Naive thymus-derived CD8-positive, alpha-beta T cell (primary cell): ENCODE measurements at regions of chr7 and their contacts with region 1.

Region 1: DNA sequence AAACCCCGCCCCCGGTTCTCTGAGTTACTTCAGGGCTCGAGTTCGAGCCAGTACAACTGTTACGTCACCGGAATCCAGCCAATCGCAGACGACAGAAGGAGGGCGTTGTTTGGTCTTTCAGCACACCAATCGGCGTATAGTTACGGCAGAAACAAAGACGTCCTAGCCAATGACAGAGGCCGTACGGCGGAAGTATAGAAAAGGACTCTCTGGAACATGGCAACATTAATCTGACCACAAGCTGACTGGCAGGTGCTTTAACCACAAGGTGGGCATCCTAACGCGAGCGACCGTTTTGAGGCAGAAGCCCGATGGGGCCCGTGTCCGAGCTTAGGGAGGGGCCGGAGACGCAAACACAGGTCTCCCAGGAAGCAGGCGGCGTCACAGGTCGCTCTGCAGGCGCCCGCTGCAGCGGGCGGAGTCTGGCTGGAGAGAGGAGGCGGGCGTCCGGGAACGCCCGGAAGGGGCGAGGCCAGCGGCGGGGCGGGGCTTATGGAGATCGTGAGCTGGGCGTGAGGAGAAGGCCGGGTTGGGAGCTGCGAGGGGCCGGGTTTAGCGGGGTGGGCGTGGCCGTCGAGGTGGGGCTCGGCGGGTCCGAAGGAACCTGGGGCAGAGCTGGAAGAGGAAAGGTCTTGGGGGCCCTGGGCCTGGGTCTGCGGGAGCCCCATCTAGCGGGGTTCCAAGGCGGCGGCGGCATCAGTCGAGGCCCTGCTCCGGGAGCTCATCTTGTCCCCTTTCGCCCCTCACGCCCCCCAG is at the start of gene MOSPD3:
- DNase-seq: peak; percentile 95 to 100 (median 98)
- ATAC-seq: peak; percentile 89 to 92
- H3K4me3 Mint-ChIP-seq: peak within 1 kb of the TSS; percentile 95 to 100 (median 98)
- H3K27ac Mint-ChIP-seq: peak within 1 kb of the TSS; percentile 96 to 100 (median 100)
- H3K4me1 Mint-ChIP-seq: peaks cover 10 to 23% (median 21%) of the 10 kb centered on the region in 4 donors
- H3K27me3 Mint-ChIP-seq: no peaks in the 10 kb centered on the region
- polyA plus RNA-seq, gene MOSPD3: 16.0 to 21.0 (median 20.0) TPM

Region 2: DNA sequence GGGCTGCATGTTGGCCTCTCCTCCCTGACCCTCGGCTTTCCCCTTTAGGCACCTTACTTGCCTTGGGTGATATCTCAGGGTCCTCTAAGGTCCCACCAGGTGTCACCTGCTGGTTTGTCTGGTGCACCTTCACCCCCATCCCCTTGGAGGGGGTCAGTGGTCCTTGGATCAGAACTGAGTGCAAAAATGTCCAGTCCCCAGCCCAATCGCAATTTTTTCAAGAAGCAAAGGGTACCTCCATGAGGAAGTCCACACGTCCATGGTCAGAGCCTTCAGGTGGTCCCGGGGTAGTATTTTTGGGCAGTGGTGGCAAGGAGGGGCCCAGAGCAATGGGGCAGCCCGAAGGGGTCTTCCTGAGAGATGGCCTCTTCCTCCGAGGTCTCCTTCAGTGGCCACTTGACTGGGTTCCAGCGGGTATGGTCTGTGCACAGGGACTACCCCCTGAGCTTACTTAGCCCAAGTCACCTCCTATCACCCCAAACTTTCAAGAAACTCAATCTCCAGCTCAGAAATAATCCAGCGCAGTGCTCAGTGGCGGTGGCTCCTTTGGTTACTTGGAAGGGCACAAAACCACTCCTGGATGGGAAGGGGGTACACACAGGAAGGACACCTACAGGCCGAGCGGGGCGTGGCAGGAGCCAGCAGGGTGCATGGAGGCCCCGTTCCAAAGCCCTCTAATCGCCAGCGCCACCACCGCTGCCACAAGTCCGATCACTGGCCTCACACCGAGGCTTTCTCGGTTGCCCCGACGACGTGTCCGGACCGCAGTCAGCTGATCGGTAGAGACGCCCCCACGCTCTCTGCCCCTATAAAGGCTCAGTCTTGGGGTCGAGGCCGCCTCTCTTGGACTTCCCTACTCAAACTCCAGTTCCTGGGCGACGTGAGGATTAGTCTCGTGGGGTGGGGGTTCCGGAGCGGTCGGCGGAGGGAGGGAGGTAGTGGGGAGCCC is 43.0 kb before region 1 on chr7:
- POLR2A ChIA-PET with region 1: interaction called, 10 read pairs
- DNase-seq: peak in 7 of 10 donors; percentile 21 to 72 (median 47)
- ATAC-seq: peak; percentile 31 to 34
- H3K4me3 Mint-ChIP-seq: peak overlapping the region; percentile 43 to 79 (median 75)
- H3K27ac Mint-ChIP-seq: peak overlapping the region in 9 of 10 donors; percentile 74 to 92 (median 89)
- H3K4me1 Mint-ChIP-seq: peaks cover 22 to 57% (median 52%) of the 10 kb centered on the region in 4 donors
- H3K27me3 Mint-ChIP-seq: no peaks in the 10 kb centered on the region

Region 3: DNA sequence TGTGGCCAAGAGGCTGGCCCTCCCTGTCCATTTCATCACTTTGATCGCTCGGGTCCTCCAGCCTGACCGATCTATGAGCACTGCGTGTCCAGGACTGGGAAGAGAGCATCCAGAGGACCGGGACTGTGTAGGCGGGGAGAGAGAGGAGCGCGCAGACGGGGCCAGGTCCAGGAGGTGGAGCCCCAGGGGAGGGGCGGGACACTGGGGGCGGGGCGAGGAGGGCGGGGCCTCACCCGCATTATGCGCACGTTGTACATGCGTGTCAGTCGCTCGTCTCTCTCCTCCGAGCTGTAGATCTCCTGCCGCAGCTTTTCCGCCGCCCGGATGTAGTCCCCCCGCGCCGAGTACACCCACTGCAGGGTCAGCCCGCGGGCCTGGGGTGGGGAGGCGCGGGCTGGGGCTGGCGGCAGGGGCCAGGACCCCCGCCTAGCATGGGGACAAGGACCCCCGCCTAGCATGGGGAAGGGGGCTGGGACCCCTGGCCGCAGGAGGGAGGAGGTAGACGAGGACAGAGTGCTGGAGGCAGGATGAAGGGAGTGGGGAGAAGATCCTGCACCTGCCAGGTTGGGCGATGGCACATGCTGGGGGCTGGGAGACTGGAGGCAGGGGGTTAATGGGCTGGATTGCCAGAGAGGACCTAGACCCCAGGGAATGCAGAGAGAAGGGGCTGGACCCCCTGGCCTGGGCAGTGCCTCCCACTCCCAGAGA is 14.5 kb after region 1 on chr7:
- POLR2A ChIA-PET with region 1: interaction called, 39 read pairs
- DNase-seq: peak; percentile 77 to 93 (median 84)
- ATAC-seq: peak; percentile 96 to 97
- H3K4me3 Mint-ChIP-seq: peak overlapping the region; percentile 68 to 81 (median 78)
- H3K27ac Mint-ChIP-seq: peak overlapping the region; percentile 28 to 90 (median 86)
- H3K4me1 Mint-ChIP-seq: peaks cover 16 to 49% (median 39%) of the 10 kb centered on the region in 4 donors
- H3K27me3 Mint-ChIP-seq: no peaks in the 10 kb centered on the region

Region 4: DNA sequence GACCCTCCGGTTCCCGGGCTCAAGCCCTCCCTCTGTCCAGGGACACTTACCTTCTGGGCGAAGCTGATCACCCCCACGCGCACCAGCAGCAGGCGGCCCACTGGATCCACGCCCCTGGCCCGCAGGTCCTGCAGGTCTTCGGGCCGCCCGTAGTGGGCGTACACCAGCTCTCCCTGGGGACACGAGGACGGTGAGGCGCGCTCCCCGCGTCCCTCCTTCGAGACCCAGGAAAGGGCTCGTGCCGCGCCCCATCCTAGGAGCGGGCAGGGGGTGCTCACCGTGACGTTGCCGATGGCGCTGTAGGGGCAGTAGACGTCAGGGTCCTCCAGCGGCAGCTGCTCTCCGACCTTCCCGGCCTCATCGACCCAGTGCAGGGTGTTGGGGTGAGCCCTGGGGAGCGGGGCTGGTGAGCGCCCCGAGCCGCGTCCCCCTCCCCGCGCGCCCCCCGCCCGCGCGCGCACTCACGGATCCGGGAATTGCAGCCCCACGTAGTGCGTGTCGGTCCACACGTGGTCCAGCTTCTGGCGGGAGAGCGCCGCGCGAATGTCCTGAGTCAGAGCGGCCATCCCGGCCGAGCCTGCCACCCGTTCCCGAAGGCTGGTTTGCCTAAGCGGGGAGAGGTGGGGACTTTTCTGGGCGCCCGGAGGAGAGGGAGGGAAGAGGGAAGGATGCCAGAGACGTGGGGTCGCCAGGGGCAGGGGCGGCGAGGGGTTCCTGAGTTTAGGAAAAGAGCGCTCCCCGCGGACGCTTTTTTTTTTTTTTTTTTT is 21.0 kb after region 1 on chr7:
- POLR2A ChIA-PET with region 1: interaction called, 15 read pairs
- DNase-seq: peak; percentile 28 to 76 (median 46)
- ATAC-seq: peak; percentile 79 to 81
- H3K4me3 Mint-ChIP-seq: peak overlapping the region; percentile 77 to 87 (median 82)
- H3K27ac Mint-ChIP-seq: peak overlapping the region in 7 of 10 donors; percentile 34 to 79 (median 57)
- H3K4me1 Mint-ChIP-seq: peaks cover 17 to 38% (median 31%) of the 10 kb centered on the region in 4 donors
- H3K27me3 Mint-ChIP-seq: peaks cover 0 to 5% (median 0%) of the 10 kb centered on the region in 5 donors

Region 5: GRCh38 chr7:100673300-100673941 is 61.3 kb after region 1 on chr7 and contains the start of gene GNB2:
- POLR2A ChIA-PET with region 1: interaction called, 32 read pairs
- DNase-seq: peak; percentile 92 to 97 (median 96)
- ATAC-seq: peak; percentile 53 to 55
- H3K4me3 Mint-ChIP-seq: peak within 1 kb of the TSS; percentile 94 to 97 (median 96)
- H3K27ac Mint-ChIP-seq: peak within 1 kb of the TSS; percentile 84 to 99 (median 97)
- H3K4me1 Mint-ChIP-seq: peaks cover 8 to 22% (median 21%) of the 10 kb centered on the region in 4 donors
- H3K27me3 Mint-ChIP-seq: no peaks in the 10 kb centered on the region
- polyA plus RNA-seq, gene GNB2: 34.8 to 42.4 (median 42.1) TPM

Region 6: DNA sequence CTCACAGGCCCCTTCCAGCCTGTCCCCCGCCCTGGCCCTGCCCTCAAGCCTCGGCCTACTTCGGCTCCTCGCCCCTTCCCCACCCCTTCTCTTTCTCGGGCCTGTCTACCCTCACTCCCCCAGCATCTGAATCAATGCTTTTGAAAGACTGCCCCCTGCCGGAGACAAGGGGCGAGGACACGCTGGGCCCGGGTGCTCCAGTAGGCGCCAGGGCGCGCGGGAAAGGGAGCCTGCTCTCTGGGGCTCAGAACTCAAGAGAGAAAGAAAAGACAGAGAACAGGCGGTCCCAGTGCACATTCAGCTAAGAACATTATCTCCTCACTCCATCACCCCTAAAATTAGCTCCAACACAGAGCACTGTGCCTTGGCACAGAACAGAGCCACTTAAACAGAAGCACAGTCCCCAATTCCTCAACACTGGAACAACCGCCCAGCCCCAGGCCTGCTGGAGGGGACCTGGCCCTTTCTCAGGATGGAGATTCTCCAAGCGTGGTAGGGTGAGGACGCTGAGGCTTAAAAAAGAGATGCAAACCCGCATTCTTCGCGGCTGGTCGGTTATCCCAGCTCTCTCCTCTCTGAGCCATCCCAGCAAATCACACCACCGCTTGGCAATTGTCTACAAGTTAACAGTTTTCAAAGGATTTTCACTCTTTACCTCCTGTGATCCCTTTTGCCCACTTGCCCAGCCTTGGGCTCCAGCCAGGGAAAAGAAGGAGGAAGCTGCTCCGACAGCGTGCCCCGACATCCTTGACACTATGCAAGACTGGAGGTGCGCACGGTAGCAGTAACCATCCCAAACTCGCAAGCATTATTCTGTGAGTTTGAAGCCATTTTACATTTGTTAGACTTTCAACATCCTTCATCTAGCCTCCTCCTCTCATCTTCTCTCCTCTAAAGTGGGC is 79.8 kb after region 1 on chr7:
- POLR2A ChIA-PET with region 1: interaction called, 29 read pairs
- DNase-seq: peak; percentile 59 to 89 (median 78)
- ATAC-seq: peak; percentile 71 to 73
- H3K4me3 Mint-ChIP-seq: peak overlapping the region; percentile 88 to 99 (median 95)
- H3K27ac Mint-ChIP-seq: peak overlapping the region; percentile 30 to 97 (median 90)
- H3K4me1 Mint-ChIP-seq: peaks cover 23 to 56% (median 46%) of the 10 kb centered on the region in 4 donors
- H3K27me3 Mint-ChIP-seq: no peaks in the 10 kb centered on the region

Region 7: GRCh38 chr7:100705753-100706671 is 93.9 kb after region 1 on chr7 and contains the start of gene POP7:
- POLR2A ChIA-PET with region 1: interaction called, 13 read pairs
- DNase-seq: peak; percentile 96 to 99 (median 98)
- ATAC-seq: peak; percentile 93 to 95
- H3K4me3 Mint-ChIP-seq: peak within 1 kb of the TSS; percentile 91 to 99 (median 96)
- H3K27ac Mint-ChIP-seq: peak within 1 kb of the TSS; percentile 88 to 96 (median 93)
- H3K4me1 Mint-ChIP-seq: peaks cover 8 to 25% (median 20%) of the 10 kb centered on the region in 4 donors
- H3K27me3 Mint-ChIP-seq: peaks cover 0 to 2% (median 0%) of the 10 kb centered on the region in 5 donors
- polyA plus RNA-seq, gene POP7: 32.6 to 41.7 (median 33.0) TPM